ENCODE measurements at regions of chr6 and their contacts with region 1.

Region 1: GRCh38 chr6:82701336-82701735 is 337.7 kb downstream of the TPBG start:
- DNase-seq: no peak
- ATAC-seq: no peak
- H3K4me3 ChIP-seq: no peak overlapping the region
- H3K27ac ChIP-seq: no peak overlapping the region
- H3K4me1 ChIP-seq: no peaks in the 10 kb centered on the region
- H3K27me3 ChIP-seq: no peaks in the 10 kb centered on the region
- CTCF ChIP-seq: no peak
- EP300 ChIP-seq: no peak
- POLR2A ChIP-seq: no peak
- RAD21 ChIP-seq: no peak

Region 2: DNA sequence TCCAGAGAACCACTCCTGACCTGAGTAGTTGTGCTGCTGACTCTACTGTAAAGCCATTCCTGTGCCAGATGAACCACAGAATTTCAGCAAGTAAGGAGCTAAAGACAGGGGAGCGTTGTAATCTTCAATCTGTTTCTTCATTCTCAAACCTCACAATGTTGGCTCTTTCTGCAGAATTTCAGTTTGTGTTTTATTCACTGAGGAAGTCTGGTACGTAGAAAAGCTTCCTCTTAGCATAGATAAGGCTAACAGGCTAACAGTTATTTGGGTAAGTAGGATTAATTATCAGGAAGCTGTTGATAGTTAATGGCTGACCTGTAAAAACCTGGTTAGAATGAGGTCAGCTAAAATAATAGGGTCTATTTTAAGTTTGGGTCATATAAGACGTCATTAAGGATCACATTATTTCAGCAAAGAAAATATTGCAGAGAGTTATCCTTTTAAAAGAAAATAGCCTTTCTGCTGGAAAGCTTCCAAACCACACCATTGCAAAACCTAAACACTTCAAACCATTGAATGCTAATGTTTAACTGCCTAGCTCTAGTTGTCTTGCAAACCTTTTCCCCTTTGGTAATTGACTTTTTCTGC is 934.8 kb before region 1 on chr6:
- CTCF ChIA-PET with region 1: no interaction called
- POLR2A ChIA-PET with region 1: no interaction called
- in situ Hi-C with region 1: no loop called
- intact Hi-C with region 1: no loop called
- DNase-seq: no peak
- ATAC-seq: no peak
- H3K4me3 ChIP-seq: no peak overlapping the region
- H3K27ac ChIP-seq: no peak overlapping the region
- H3K4me1 ChIP-seq: no peaks in the 10 kb centered on the region
- H3K27me3 ChIP-seq: no peaks in the 10 kb centered on the region
- CTCF ChIP-seq: no peak
- EP300 ChIP-seq: no peak
- POLR2A ChIP-seq: no peak
- RAD21 ChIP-seq: no peak

Region 3: GRCh38 chr6:82687855-82688254 is 13.5 kb before region 1 on chr6:
- CTCF ChIA-PET with region 1: no interaction called
- POLR2A ChIA-PET with region 1: interaction called, 5 read pairs
- in situ Hi-C with region 1: no loop called
- intact Hi-C with region 1: loop called (anchors 1 kb)
- DNase-seq: no peak
- ATAC-seq: no peak
- H3K4me3 ChIP-seq: no peak overlapping the region
- H3K27ac ChIP-seq: no peak overlapping the region
- H3K4me1 ChIP-seq: no peaks in the 10 kb centered on the region
- H3K27me3 ChIP-seq: no peaks in the 10 kb centered on the region
- CTCF ChIP-seq: no peak
- EP300 ChIP-seq: no peak
- POLR2A ChIP-seq: no peak
- RAD21 ChIP-seq: no peak

Region 4: GRCh38 chr6:83592770-83593394 is 891.5 kb after region 1 on chr6:
- CTCF ChIA-PET with region 1: no interaction called
- POLR2A ChIA-PET with region 1: no interaction called
- in situ Hi-C with region 1: no loop called
- intact Hi-C with region 1: no loop called
- DNase-seq: peak; percentile 8 to 62 (median 24)
- ATAC-seq: peak; percentile 98
- H3K4me3 ChIP-seq: no peak overlapping the region
- H3K27ac ChIP-seq: no peak overlapping the region
- H3K4me1 ChIP-seq: peaks cover 0 to 4% of the 10 kb centered on the region in 2 experiments; a peak in 1 of 5 replicates
- H3K27me3 ChIP-seq: peaks cover 2 to 5% of the 10 kb centered on the region in 2 experiments; a peak in 2 of 5 replicates
- CTCF ChIP-seq: peak; percentile 64 to 73 (median 69); a peak in 5 of 6 replicates
- EP300 ChIP-seq: no peak
- POLR2A ChIP-seq: no peak
- RAD21 ChIP-seq: peak; percentile 38 to 53; a peak in 3 of 4 replicates